H1 (cell line): ENCODE measurements at regions of chr3 and their contacts with region 1.

Region 1: GRCh38 chr3:184748219-184749135 is 36.6 kb upstream of the MAGEF1 start:
- DNase-seq: no peak
- H3K4me3 ChIP-seq: no peak overlapping the region
- H3K27ac ChIP-seq: no peak overlapping the region
- H3K4me1 ChIP-seq: peaks cover 4 to 14% (median 5%) of the 10 kb centered on the region in 4 experiments; a peak in 5 of 7 replicates
- H3K27me3 ChIP-seq: peaks cover 0 to 4% (median 1%) of the 10 kb centered on the region in 4 experiments; a peak in 2 of 7 replicates
- CTCF ChIP-seq: peak; percentile 63 to 81 (median 69)
- EP300 ChIP-seq: no peak
- POLR2A ChIP-seq: no peak
- RAD21 ChIP-seq: peak; percentile 74 to 80

Region 2: DNA sequence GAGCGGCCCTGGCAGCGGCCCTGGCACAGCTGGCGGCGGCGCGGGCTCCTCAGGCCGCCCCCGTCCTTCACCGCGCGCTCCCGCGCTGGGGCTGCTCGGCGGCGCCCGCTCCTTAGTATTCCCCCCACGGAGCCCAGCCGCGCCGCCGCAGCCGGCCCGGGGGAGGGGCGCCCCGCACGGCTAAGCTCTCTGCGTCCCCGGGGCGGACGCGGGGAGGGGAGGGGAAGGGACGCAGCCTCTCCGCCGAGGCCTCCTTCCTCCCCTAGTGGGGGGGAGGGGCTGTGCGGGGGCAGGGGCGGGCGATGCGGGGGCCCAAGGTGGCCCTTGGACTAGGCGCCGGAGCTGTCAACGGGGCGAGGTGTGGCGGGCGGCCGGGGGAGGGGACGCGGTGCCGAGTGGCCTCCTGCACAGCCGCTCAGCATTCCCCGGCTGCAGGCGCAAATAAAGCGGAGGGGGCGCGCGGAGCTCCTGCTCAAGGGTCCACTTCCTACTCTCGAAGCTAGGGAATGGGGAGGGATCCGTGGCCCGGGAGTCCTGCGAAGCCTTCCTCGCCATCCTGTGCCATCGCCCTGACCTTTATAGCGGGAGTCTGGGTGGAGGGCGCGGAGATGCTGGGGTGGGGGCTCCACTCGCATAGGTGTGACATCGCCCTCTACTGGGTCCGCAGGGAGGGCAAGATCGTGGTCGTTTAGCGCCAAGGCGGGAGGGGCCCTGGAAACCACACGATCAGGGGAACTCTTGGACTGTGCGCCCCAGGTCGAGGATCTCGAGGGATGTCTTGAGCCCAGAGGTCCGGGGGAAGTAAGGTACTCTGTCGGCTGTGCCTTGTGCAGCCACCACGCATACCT is 164.7 kb before region 1 on chr3:
- CTCF ChIA-PET with region 1: interaction called, 10 read pairs
- POLR2A ChIA-PET with region 1: no interaction called
- DNase-seq: peak in 1 of 2 experiments; percentile 68
- H3K4me3 ChIP-seq: peak overlapping the region; percentile 51 to 71 (median 58)
- H3K27ac ChIP-seq: no peak overlapping the region
- H3K4me1 ChIP-seq: peaks cover 0 to 28% (median 20%) of the 10 kb centered on the region in 4 experiments; a peak in 6 of 7 replicates
- H3K27me3 ChIP-seq: peaks cover 8 to 63% (median 50%) of the 10 kb centered on the region in 4 experiments
- CTCF ChIP-seq: peak in 2 of 3 experiments; percentile 18 to 51; a peak in 2 of 4 replicates
- EP300 ChIP-seq: no peak
- POLR2A ChIP-seq: no peak
- RAD21 ChIP-seq: peak in 1 of 2 experiments; percentile 37; a peak in 1 of 4 replicates

Region 3: DNA sequence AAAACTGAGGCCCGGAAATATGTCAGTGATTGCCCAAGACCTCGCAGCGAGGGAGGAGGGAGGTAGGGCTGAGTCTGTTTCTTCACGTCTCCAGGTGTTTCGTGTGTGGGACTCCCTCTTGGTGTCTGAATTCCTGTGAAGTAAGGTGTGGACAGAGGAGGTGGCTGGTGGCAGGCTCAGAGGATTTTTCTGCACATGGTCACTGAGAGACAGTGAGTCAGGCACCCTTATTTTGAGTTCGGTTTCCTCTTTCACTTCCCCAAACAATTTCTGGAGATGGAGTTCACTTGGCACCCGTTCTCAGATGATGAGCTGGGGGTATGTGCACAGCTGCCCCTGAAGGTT is 17.2 kb after region 1 on chr3:
- CTCF ChIA-PET with region 1: interaction called, 38 read pairs
- POLR2A ChIA-PET with region 1: interaction called, 3 read pairs
- DNase-seq: no peak
- H3K4me3 ChIP-seq: no peak overlapping the region
- H3K27ac ChIP-seq: no peak overlapping the region
- H3K4me1 ChIP-seq: peaks cover 4 to 10% (median 6%) of the 10 kb centered on the region in 4 experiments; a peak in 5 of 7 replicates
- H3K27me3 ChIP-seq: peaks cover 0 to 2% (median 0%) of the 10 kb centered on the region in 4 experiments; a peak in 3 of 7 replicates
- CTCF ChIP-seq: no peak
- EP300 ChIP-seq: no peak
- POLR2A ChIP-seq: no peak
- RAD21 ChIP-seq: no peak